Transverse colon (tissue), 4 donors: ENCODE measurements at regions of chr4 and their contacts with region 1.

Region 1: GRCh38 chr4:188295899-188296298 is 156.7 kb downstream of the TRIML1 start:
- DNase-seq: no peak
- H3K4me3 ChIP-seq: no peak overlapping the region
- H3K27ac ChIP-seq: no peak overlapping the region
- H3K4me1 ChIP-seq: no peaks in the 10 kb centered on the region
- H3K27me3 ChIP-seq: no peaks in the 10 kb centered on the region
- CTCF ChIP-seq: no peak
- EP300 ChIP-seq: no peak
- POLR2A ChIP-seq: no peak

Region 2: GRCh38 chr4:187685247-187685646 is 610.7 kb before region 1 on chr4:
- in situ Hi-C with region 1: no loop called
- intact Hi-C with region 1: no loop called
- DNase-seq: no peak
- H3K4me3 ChIP-seq: no peak overlapping the region
- H3K27ac ChIP-seq: no peak overlapping the region
- H3K4me1 ChIP-seq: no peaks in the 10 kb centered on the region
- H3K27me3 ChIP-seq: no peaks in the 10 kb centered on the region
- CTCF ChIP-seq: no peak
- EP300 ChIP-seq: no peak
- POLR2A ChIP-seq: no peak

Region 3: GRCh38 chr4:188332265-188332664 is 36.4 kb after region 1 on chr4:
- in situ Hi-C with region 1: no loop called
- intact Hi-C with region 1: loop called (anchors 2 kb)
- DNase-seq: no peak
- H3K4me3 ChIP-seq: no peak overlapping the region
- H3K27ac ChIP-seq: no peak overlapping the region
- H3K4me1 ChIP-seq: no peaks in the 10 kb centered on the region
- H3K27me3 ChIP-seq: no peaks in the 10 kb centered on the region
- CTCF ChIP-seq: no peak
- EP300 ChIP-seq: no peak
- POLR2A ChIP-seq: no peak

Region 4: DNA sequence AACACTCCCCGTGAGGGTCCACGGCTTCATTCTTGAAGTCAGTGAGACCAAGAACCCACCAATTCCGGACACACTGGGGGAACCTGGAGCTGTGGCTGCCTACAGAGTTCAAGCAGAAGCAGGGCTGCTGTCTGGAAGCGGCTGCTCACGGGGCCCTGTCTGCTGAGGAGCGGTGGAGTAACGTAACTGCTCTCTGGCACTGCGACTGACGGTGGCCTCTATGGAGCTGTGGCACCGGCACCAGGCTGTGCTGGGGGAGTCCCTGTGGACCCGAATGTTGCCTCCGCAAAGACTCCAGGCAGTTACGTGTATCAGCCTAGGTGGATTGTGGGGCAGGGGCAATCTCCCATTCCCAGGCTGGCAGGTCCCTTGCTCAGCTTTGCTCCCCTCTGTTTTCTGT is 941.4 kb after region 1 on chr4:
- in situ Hi-C with region 1: no loop called
- intact Hi-C with region 1: no loop called
- DNase-seq: no peak
- H3K4me3 ChIP-seq: no peak overlapping the region
- H3K27ac ChIP-seq: no peak overlapping the region
- H3K4me1 ChIP-seq: no peaks in the 10 kb centered on the region
- H3K27me3 ChIP-seq: no peaks in the 10 kb centered on the region
- CTCF ChIP-seq: no peak
- EP300 ChIP-seq: no peak
- POLR2A ChIP-seq: no peak

Region 5: GRCh38 chr4:189341881-189342280 is 1046.0 kb after region 1 on chr4:
- in situ Hi-C with region 1: no loop called
- intact Hi-C with region 1: loop called (anchors 5 kb)
- DNase-seq: no peak
- H3K4me3 ChIP-seq: no peak overlapping the region
- H3K27ac ChIP-seq: no peak overlapping the region
- H3K4me1 ChIP-seq: no peaks in the 10 kb centered on the region
- H3K27me3 ChIP-seq: no peaks in the 10 kb centered on the region
- CTCF ChIP-seq: no peak
- EP300 ChIP-seq: no peak
- POLR2A ChIP-seq: no peak

Region 6: GRCh38 chr4:189547345-189547958 is 1251.6 kb after region 1 on chr4:
- in situ Hi-C with region 1: no loop called
- intact Hi-C with region 1: no loop called
- DNase-seq: no peak
- H3K4me3 ChIP-seq: no peak overlapping the region
- H3K27ac ChIP-seq: no peak overlapping the region
- H3K4me1 ChIP-seq: no peaks in the 10 kb centered on the region
- H3K27me3 ChIP-seq: no peaks in the 10 kb centered on the region
- CTCF ChIP-seq: no peak
- EP300 ChIP-seq: no peak
- POLR2A ChIP-seq: no peak